Cardiac septum (tissue), 1 donor: ENCODE measurements at regions of chr2 and their contacts with region 1.

Region 1: DNA sequence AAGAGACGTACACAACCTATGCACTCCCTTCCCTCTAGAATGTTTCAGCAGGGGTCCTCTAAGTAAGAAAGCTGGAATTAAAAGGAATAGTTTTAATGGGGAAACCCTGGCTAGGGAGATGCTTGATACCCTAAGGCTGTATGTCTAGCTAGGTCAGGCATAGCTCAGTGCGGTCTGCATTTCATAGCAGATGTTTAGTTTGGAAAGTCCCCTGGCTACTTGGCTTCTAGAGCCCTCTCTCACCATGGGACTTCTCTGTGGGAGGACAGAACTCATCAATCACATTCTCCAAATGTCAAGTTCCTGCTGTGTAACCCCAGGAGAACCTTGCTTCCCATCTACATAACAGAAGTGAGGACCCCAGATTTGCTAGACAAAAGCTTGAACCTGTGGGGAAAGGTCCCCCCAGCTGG is 24.1 kb upstream of the ANXA4 start:
- DNase-seq: no peak

Region 2: DNA sequence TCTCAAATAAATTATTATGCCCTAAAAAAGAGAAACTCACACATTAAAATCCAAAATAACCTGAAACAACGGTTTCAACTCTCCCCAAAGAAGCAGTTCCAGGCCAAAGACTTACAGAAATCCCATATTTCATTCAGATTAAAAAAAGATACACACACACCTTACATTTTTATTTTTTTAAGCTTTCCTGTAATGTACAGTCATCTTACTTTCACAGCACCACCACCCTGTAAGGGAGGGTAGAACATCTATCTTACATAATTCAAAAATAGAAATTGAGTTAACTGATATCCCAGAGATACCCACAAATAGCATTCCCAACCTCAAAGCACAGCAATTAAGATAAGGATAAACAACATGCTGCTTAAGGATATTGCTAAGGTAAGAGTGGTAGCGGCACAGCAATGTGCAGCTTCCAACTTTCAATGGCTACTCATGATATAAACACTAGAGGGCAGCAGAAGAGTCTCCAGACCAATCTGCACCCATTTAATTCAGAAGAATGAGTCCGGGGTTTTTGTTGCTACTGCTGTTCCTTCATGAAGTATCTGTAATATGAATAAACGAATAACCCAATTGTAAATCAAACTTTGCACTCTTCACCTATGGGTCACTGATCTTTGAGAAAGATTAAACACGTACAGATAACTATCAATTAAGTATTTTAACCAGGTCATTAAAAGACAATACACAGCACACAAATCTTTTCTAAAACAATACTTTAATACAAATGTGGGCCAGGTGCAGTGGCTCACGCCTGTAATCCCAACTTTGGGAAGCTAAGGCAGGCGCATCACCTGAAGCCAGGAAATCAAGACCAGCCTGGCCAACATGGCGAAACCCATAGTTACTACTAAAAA is 342.1 kb before region 1 on chr2:
- intact Hi-C with region 1: loop called (anchors 10 kb)
- DNase-seq: no peak

Region 3: GRCh38 chr2:69559442-69560146 is 158.3 kb before region 1 on chr2:
- intact Hi-C with region 1: loop called (anchors 2 kb)
- DNase-seq: no peak

Region 4: GRCh38 chr2:69667805-69668382 is 50.0 kb before region 1 on chr2:
- intact Hi-C with region 1: no loop called
- DNase-seq: no peak

Region 5: DNA sequence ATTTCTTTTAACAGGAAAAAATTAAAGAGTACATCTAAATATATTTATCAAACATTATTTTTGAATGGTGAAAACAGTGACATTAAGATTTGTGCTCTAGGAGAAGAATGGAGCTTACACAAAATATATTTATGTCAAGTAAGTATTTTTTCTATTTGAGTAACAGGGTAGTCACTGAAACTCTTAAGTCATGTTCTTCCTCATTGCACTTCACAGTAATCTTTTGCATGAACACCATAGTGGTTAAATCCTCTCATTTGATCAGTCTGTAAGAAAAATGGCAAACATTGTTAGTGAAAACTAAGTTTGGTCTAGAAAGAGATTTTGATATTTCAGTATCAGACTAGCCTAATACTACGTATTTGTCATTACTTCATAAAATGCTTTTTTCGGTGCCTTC is 119.7 kb after region 1 on chr2:
- intact Hi-C with region 1: no loop called
- DNase-seq: no peak